Adrenal gland (tissue), 19 donors: ENCODE measurements at regions of chr20 and their contacts with region 1.

Region 1: DNA sequence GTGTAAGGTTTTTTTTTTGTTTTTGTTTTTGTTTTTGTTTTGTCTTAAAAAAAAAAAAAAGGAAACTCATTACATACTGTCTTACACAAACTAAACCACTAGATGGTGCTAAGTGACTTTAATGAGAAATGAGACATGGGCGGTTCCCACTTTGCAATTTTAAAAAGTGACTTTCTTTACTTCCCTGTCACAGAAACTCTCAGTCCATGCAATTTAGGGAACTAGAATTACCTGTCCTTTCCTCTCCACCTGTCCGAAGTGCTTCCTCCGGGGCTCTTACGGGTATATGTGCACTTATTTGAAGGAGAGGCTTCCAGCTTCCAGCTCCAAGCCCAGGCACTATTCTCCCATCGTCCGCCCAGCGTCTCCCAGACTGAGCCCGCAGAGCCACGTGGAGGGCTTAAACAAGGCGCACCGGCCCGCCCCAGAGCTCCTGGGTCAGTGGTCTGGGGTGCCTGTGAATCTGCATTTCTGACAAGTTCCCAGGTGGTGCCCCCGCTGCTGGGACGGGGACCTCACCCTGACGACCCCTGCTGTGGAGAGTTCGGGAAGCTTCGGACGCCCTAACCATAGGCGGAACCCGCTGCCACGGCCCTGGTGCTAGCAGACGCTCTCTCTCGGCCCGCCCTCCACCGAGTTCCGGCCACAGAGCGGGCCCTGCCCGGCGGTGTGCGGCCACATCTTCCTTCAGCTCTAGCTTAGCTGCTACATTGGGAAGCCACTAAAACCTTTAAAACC is 26.1 kb downstream of the BFSP1 start:
- DNase-seq: peak; percentile 37 to 59 (median 47)
- H3K4me3 ChIP-seq: peak overlapping the region in 3 of 4 donors; percentile 9 to 76 (median 21)
- H3K27ac ChIP-seq: peak overlapping the region in 1 of 5 donors; percentile 44
- H3K4me1 ChIP-seq: peaks cover 0 to 8% of the 10 kb centered on the region in 2 donors
- H3K27me3 ChIP-seq: no peaks in the 10 kb centered on the region
- CTCF ChIP-seq: peak; percentile 56 to 82 (median 70)
- POLR2A ChIP-seq: no peak

Region 2: GRCh38 chr20:17636523-17637412 is 131.7 kb after region 1 on chr20:
- intact Hi-C with region 1: no loop called
- DNase-seq: peak in 4 of 7 donors; percentile 52 to 61 (median 54)
- H3K4me3 ChIP-seq: no peak overlapping the region
- H3K27ac ChIP-seq: peak overlapping the region in 3 of 5 donors; percentile 37 to 69 (median 51)
- H3K4me1 ChIP-seq: peaks cover 22 to 55% of the 10 kb centered on the region in 2 donors
- H3K27me3 ChIP-seq: no peaks in the 10 kb centered on the region
- CTCF ChIP-seq: peak in 1 of 6 experiments; percentile 8
- POLR2A ChIP-seq: no peak

Region 3: GRCh38 chr20:17904027-17904426 is 399.0 kb after region 1 on chr20:
- intact Hi-C with region 1: loop called (anchors 10 kb)
- DNase-seq: no peak
- H3K4me3 ChIP-seq: no peak overlapping the region
- H3K27ac ChIP-seq: no peak overlapping the region
- H3K4me1 ChIP-seq: no peaks in the 10 kb centered on the region
- H3K27me3 ChIP-seq: no peaks in the 10 kb centered on the region
- CTCF ChIP-seq: no peak
- POLR2A ChIP-seq: no peak

Region 4: GRCh38 chr20:17995967-17996819 is 491.1 kb after region 1 on chr20:
- intact Hi-C with region 1: loop called in 1 of 2 experiments (anchors 10 kb)
- DNase-seq: peak; percentile 43 to 84 (median 61)
- H3K4me3 ChIP-seq: no peak overlapping the region
- H3K27ac ChIP-seq: peak overlapping the region in 1 of 5 donors; percentile 15
- H3K4me1 ChIP-seq: peaks cover 0 to 5% of the 10 kb centered on the region in 2 donors
- H3K27me3 ChIP-seq: no peaks in the 10 kb centered on the region
- CTCF ChIP-seq: peak; percentile 94 to 100 (median 97)
- POLR2A ChIP-seq: no peak

Region 5: DNA sequence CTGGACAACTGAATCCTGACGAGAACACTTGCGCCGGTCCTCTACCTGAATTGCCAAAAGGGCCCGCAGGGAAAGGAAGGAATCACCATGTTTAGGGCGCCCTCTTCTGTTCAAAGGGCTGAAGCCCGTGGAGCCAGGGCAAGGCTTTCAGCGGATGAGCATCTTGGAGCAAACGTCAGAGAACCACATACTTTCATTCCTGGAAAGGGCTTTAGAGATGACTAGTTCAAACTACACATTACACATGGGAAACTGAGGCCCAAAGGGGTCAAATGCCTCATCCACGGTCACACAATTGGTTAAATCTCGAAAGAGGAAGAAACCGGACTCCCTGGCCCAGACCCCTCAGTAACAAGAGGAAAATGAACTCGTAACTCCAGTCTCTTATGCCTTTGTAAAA is 771.8 kb after region 1 on chr20:
- intact Hi-C with region 1: loop called in 1 of 2 experiments (anchors 10 kb)
- DNase-seq: peak; percentile 73 to 83 (median 78)
- H3K4me3 ChIP-seq: no peak overlapping the region
- H3K27ac ChIP-seq: no peak overlapping the region
- H3K4me1 ChIP-seq: no peaks in the 10 kb centered on the region
- H3K27me3 ChIP-seq: peaks cover 18% of the 10 kb centered on the region
- CTCF ChIP-seq: peak; percentile 59 to 78 (median 75)
- POLR2A ChIP-seq: no peak